ENCODE measurements at regions of chr1 and their contacts with region 1.

Region 1: DNA sequence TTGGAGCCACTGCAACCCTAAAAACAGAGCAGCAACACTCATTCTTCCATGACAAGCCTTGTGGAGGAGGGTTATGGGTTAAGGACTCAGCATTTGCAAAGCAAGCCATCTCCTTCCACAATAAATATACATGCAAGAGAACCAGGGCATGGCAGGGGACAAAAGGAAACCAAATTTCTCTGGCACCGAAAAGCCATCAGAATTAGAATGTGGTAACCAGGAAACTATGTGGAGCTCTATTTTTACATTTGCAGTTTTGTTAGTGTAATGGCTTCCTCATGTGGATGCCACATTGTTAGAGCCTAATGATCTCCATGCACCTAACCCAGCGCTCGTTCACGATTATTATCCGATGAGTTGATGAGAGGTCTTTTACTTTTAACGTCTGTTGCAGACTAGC is 91.7 kb downstream of the NAV1 start:
- DNase-seq: no peak
- ATAC-seq: no peak
- H3K4me3 ChIP-seq: no peak overlapping the region
- H3K27ac ChIP-seq: no peak overlapping the region
- H3K4me1 ChIP-seq: peaks cover 23% of the 10 kb centered on the region
- CTCF ChIP-seq: no peak
- EP300 ChIP-seq: no peak
- POLR2A ChIP-seq: no peak
- RAD21 ChIP-seq: no peak

Region 2: DNA sequence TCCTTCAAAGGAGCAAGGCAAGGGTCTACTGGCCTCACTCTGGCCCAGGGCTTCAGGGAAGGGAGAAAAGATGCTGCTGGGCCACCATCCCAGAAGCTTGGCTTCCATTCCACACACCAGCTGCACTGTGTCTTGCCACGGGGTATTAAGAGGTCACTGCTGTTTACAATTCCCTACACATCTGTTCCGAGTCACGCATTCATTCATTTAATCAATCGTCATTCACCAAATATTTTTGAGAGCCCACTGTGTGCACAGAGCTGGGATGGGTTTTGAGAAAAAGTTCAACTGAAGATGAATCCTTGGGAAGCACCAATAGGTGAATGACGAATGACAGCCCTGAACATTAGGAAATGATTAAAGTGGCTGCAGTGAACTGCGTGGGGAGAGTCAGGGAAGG is 10.0 kb after region 1 on chr1:
- CTCF ChIA-PET with region 1: interaction called, 12 read pairs
- POLR2A ChIA-PET with region 1: no interaction called
- DNase-seq: no peak
- ATAC-seq: no peak
- H3K4me3 ChIP-seq: no peak overlapping the region
- H3K27ac ChIP-seq: no peak overlapping the region
- H3K4me1 ChIP-seq: no peaks in the 10 kb centered on the region
- CTCF ChIP-seq: no peak
- EP300 ChIP-seq: no peak
- POLR2A ChIP-seq: no peak
- RAD21 ChIP-seq: no peak

Region 3: DNA sequence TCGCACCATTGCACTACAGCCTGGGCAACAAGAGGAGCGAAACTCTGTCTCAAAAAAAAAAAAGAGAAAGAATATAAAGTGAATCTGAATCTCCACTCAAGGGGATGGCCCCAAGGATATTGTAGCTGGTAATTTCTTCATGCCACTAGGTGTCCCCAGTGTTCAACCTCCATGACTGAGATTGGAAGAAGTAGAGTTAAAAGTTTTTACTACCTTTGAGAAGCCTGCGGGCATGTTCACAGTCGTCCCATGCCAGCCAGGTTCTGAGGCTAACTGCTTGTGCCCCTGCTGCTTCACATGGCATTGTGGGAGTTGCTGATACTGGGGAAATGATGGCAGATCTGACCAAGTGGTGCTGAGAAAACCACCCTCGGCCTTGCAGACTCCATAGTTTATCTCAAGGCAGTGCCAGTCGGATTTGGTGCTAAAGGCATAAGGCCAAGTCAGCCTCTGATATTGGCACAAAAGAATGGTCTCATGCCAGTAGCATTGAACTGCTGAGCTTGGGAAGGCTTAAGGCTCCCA is 247.4 kb after region 1 on chr1:
- CTCF ChIA-PET with region 1: no interaction called
- POLR2A ChIA-PET with region 1: no interaction called
- DNase-seq: peak; percentile 57 to 58
- ATAC-seq: peak; percentile 68 to 70; a peak in 4 of 6 replicates
- H3K4me3 ChIP-seq: no peak overlapping the region
- H3K27ac ChIP-seq: no peak overlapping the region
- H3K4me1 ChIP-seq: peaks cover 8% of the 10 kb centered on the region
- CTCF ChIP-seq: peak; percentile 63
- EP300 ChIP-seq: no peak
- POLR2A ChIP-seq: no peak
- RAD21 ChIP-seq: peak; percentile 53

Measured in A549 (cell line).